MCF 10A (cell line): ENCODE measurements at regions of chr2 and their contacts with region 1.

Region 1: GRCh38 chr2:240513549-240514287 is 44.1 kb downstream of the ANKMY1 start:
- DNase-seq: peak; percentile 76
- H3K4me3 Mint-ChIP-seq: no peak overlapping the region
- H3K27ac Mint-ChIP-seq: peak overlapping the region; percentile 16
- H3K4me1 Mint-ChIP-seq: peaks cover 12% of the 10 kb centered on the region
- H3K27me3 Mint-ChIP-seq: no peaks in the 10 kb centered on the region
- CTCF ChIP-seq: peak; percentile 77

Region 2: GRCh38 chr2:240524963-240525718 is 11.4 kb after region 1 on chr2:
- CTCF ChIA-PET with region 1: interaction called, 10 read pairs
- POLR2A ChIA-PET with region 1: no interaction called
- intact Hi-C with region 1: no loop called
- DNase-seq: no peak
- H3K4me3 Mint-ChIP-seq: no peak overlapping the region
- H3K27ac Mint-ChIP-seq: no peak overlapping the region
- H3K4me1 Mint-ChIP-seq: no peaks in the 10 kb centered on the region
- H3K27me3 Mint-ChIP-seq: no peaks in the 10 kb centered on the region
- CTCF ChIP-seq: no peak

Region 3: GRCh38 chr2:240566203-240567136 is 52.8 kb after region 1 on chr2:
- CTCF ChIA-PET with region 1: interaction called, 16 read pairs
- POLR2A ChIA-PET with region 1: interaction called, 12 read pairs
- intact Hi-C with region 1: loop called (anchors 5 kb)
- DNase-seq: peak; percentile 91
- H3K4me3 Mint-ChIP-seq: peak overlapping the region; percentile 78
- H3K27ac Mint-ChIP-seq: peak overlapping the region; percentile 80
- H3K4me1 Mint-ChIP-seq: peaks cover 34% of the 10 kb centered on the region
- H3K27me3 Mint-ChIP-seq: no peaks in the 10 kb centered on the region
- CTCF ChIP-seq: peak; percentile 89

Region 4: DNA sequence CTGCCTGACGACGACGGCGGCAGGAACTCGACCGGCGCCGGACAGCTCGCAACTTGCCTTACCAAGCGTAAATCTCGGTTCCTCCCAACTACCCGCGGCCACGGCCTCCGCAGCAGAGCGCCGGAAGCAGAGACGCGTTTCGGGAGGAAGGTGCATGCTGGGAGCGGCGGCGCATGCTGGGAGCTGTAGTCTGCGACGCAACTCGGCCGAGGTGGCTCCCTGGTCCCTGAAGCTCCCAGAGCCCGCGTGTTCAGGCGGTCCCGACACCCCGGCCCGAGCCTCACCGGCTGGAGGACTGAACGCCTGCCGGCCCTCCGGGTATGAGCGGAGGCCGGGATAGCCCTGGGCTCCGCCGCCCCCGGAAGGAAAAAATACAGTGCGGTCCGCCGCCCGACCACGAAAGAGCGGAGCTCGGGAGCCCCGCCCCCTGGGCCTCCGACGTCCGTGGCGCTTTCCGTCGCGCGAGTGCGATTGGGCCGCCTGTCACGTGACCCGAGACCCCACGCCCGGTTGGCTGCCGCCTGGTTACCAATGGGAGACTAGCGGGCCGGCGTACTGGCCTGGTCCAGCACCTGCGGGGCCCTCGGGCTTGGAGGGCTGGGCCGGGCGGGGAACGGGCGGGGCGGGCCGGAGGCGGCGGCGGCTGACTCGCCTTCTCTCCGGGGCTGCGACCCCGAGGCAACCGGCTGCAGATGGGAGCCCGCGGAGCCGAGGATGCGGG is 72.6 kb after region 1 on chr2 and contains the start of gene CAPN10:
- CTCF ChIA-PET with region 1: interaction called, 19 read pairs
- POLR2A ChIA-PET with region 1: interaction called, 10 read pairs
- intact Hi-C with region 1: no loop called
- DNase-seq: peak; percentile 96
- H3K4me3 Mint-ChIP-seq: peak within 1 kb of the TSS; percentile 87
- H3K27ac Mint-ChIP-seq: peak within 1 kb of the TSS; percentile 94
- H3K4me1 Mint-ChIP-seq: peaks cover 35% of the 10 kb centered on the region
- H3K27me3 Mint-ChIP-seq: no peaks in the 10 kb centered on the region
- CTCF ChIP-seq: no peak
- total RNA-seq, gene CAPN10: 27.6 and 35.2 TPM in 2 replicates

Region 5: GRCh38 chr2:240596491-240596931 is 82.8 kb after region 1 on chr2:
- CTCF ChIA-PET with region 1: no interaction called
- POLR2A ChIA-PET with region 1: no interaction called
- intact Hi-C with region 1: no loop called
- DNase-seq: no peak
- H3K4me3 Mint-ChIP-seq: no peak overlapping the region
- H3K27ac Mint-ChIP-seq: no peak overlapping the region
- H3K4me1 Mint-ChIP-seq: no peaks in the 10 kb centered on the region
- H3K27me3 Mint-ChIP-seq: no peaks in the 10 kb centered on the region
- CTCF ChIP-seq: no peak